ENCODE measurements at regions of chr3 and their contacts with region 1.

Region 1: GRCh38 chr3:175287361-175287963 is 428.3 kb downstream of the NAALADL2 start:
- DNase-seq: no peak
- H3K4me3 ChIP-seq: no peak overlapping the region
- H3K27ac ChIP-seq: no peak overlapping the region
- H3K4me1 ChIP-seq: no peaks in the 10 kb centered on the region
- H3K27me3 ChIP-seq: no peaks in the 10 kb centered on the region
- CTCF ChIP-seq: no peak
- POLR2A ChIP-seq: no peak

Region 2: DNA sequence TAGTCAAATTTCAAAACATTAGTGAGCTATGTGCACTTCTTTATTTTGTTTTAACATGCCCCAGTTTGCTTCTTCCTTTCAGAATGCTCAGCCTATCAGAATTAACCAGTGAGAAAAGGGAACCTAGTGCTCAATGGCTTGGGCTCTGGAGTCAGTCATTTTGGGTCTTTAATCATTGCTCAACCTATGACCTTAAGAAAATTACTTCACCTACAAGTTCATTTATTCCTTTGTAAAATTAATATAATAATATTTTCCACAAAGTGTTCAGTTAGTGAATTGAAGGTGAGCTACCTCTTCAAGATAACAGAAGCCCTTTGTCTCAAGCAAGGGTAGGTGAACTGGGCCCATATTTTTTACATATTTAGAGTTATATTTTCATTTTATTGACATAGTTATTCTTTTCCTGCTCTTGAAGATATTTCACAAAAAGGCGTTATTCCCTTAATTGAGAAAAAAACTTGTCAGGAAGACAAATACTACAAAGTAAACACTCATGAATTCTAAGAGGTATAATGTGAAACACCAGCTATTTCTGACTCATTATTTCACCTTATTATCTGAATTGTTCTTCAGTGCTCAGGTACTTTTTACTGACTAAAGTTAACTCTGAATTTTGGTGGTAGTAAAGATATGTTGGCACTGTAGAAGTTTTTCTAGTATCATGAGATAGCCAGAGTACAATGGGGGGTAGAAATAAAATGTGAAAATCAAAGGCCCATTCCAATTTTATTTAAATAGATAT is 12.8 kb before region 1 on chr3:
- CTCF ChIA-PET with region 1: interaction called, 10 read pairs
- POLR2A ChIA-PET with region 1: no interaction called
- dilution Hi-C with region 1: no loop called
- intact Hi-C with region 1: no loop called
- DNase-seq: no peak
- H3K4me3 ChIP-seq: no peak overlapping the region
- H3K27ac ChIP-seq: no peak overlapping the region
- H3K4me1 ChIP-seq: no peaks in the 10 kb centered on the region
- H3K27me3 ChIP-seq: no peaks in the 10 kb centered on the region
- CTCF ChIP-seq: no peak
- POLR2A ChIP-seq: no peak